Activated CD8-positive, alpha-beta T cell treated with anti-CD3 and anti-CD28 coated beads for 36 hours (primary cell): ENCODE measurements at regions of chr1 and their contacts with region 1.

Region 1: DNA sequence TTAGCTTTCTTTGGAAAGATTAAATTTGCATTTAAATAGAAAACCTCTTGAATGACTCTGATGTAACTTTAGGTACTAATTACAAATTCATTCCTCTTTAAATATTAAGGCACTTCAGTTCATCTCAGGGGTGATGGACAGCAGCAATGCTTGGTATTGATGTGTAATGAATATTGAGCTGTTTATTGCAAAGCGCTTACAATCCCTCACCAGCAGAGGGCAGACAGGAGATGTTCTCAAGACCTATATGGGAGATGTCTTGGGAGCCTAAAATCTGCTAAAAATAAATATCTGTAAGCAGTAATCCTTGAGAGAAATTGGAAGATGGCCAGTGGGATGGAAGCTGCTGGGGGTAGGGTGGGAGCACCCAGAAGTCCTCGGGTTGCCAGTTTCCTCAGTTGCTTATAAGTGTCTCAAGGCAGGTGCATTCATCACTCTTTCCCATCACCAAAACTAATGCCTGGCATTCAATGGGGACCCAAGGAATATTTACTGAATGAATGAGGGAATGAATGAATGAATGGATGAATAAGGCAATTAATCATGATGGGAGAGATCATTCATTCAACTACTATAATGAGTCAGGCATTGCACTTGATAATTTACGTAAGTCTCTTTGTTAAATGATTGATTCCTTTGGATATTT is 2.3 kb downstream of the KLHDC8A start:
- DNase-seq: peak; percentile 82
- ATAC-seq: peak; percentile 82
- H3K4me3 Mint-ChIP-seq: no peak overlapping the region
- H3K27ac Mint-ChIP-seq: no peak overlapping the region
- H3K4me1 Mint-ChIP-seq: no peaks in the 10 kb centered on the region
- H3K27me3 Mint-ChIP-seq: peaks cover 2% of the 10 kb centered on the region
- CTCF ChIP-seq: peak; percentile 88

Region 2: DNA sequence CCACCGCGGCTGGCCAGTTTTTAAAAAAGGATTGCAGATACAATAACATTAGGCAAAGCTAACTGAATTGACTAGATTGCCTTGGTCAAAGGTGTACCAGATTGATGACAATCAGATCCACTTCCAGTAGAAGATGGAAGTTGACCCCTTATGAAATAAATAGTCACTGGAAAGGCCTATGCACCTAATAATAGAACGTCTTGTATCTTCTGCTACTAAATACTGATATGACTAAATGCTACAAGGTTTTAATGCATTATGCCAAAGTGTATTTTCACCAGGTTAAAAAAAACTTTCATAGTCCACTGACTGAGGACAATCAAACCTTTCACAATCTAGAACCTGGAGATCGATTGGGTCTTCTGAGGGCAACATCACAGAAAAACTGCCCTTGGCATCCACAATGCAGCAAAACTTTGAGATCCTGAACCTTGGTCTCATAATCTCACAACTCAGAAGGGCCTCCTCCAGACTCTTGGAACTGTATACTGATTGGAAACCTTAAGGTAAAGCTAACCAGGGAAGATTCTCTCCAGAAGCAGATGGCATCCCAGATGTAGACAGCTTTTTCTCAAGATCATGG is 224.8 kb before region 1 on chr1:
- CTCF ChIA-PET with region 1: no interaction called
- POLR2A ChIA-PET with region 1: no interaction called
- intact Hi-C with region 1: no loop called
- DNase-seq: no peak
- ATAC-seq: no peak
- H3K4me3 Mint-ChIP-seq: no peak overlapping the region
- H3K27ac Mint-ChIP-seq: no peak overlapping the region
- H3K4me1 Mint-ChIP-seq: no peaks in the 10 kb centered on the region
- H3K27me3 Mint-ChIP-seq: no peaks in the 10 kb centered on the region
- CTCF ChIP-seq: no peak

Region 3: GRCh38 chr1:205172729-205173366 is 181.5 kb before region 1 on chr1:
- CTCF ChIA-PET with region 1: no interaction called
- POLR2A ChIA-PET with region 1: no interaction called
- intact Hi-C with region 1: no loop called
- DNase-seq: no peak
- ATAC-seq: peak; percentile 75
- H3K4me3 Mint-ChIP-seq: no peak overlapping the region
- H3K27ac Mint-ChIP-seq: peak overlapping the region; percentile 69
- H3K4me1 Mint-ChIP-seq: peaks cover 35% of the 10 kb centered on the region
- H3K27me3 Mint-ChIP-seq: no peaks in the 10 kb centered on the region
- CTCF ChIP-seq: no peak

Region 4: DNA sequence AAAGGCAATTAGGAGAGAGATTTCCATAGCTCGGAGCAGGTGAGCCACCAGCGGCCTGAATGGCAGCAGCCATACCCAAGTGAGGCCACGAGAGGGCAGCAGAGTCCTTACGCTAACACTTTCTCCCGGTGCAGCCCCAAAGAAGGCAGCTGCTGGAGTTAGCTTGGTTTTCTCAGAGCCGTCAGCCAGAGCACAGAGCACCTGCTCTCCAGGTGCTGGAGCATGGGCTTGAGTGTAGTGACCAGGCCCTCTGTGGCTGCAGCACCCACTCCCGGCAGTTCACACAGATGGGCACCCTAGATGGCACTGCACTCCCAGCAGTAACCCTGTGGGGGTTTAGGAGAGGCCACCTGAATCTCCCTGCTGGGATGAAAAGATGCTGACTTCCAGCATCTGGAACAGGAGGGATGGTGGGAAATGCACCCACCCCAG is 80.8 kb before region 1 on chr1:
- CTCF ChIA-PET with region 1: interaction called, 35 read pairs
- POLR2A ChIA-PET with region 1: no interaction called
- intact Hi-C with region 1: no loop called
- DNase-seq: peak; percentile 92
- ATAC-seq: peak; percentile 94
- H3K4me3 Mint-ChIP-seq: no peak overlapping the region
- H3K27ac Mint-ChIP-seq: no peak overlapping the region
- H3K4me1 Mint-ChIP-seq: peaks cover 33% of the 10 kb centered on the region
- H3K27me3 Mint-ChIP-seq: no peaks in the 10 kb centered on the region
- CTCF ChIP-seq: peak; percentile 99

Region 5: DNA sequence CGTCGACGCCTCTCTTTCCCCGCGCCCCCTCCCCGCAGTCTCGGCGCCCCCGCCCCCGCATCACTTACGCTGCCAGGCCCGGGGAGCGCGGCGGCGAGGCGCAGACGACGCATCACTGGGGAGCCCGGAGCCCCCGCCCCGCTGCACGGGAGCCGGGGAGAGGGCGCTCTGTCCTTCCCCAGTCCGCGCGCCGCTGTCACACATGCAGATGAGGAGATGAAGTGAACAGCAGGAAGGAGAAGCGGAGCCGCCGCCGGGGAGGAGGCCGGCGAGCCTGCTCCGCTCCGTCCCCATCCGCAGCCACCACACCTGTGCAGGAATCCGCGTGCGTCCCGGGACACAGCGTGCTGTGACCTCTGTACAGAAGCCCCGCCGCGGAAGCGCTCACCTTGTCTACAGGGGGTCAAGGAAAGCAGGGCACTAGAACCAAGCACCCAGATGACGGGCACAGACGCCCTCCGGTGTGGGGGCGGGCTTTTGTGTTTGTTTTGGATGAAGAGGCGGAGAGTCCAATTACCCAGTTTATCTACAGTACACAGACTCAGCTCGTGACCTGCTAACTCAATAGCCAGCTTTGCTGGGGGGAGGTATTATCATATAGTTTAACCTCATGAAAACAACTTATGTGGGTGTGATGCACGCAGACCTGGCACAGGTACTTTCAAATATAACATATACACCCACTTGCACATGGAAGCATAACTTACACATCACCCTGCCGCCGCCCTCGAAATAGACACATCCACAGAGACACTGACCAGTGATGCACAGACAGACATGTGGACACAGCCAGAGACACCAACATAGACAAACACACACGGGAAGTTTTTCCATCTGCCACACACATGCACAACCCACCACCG is 10.1 kb before region 1 on chr1:
- CTCF ChIA-PET with region 1: interaction called, 23 read pairs
- POLR2A ChIA-PET with region 1: no interaction called
- intact Hi-C with region 1: no loop called
- DNase-seq: peak; percentile 65
- ATAC-seq: peak; percentile 77
- H3K4me3 Mint-ChIP-seq: peak overlapping the region; percentile 35
- H3K27ac Mint-ChIP-seq: no peak overlapping the region
- H3K4me1 Mint-ChIP-seq: peaks cover 11% of the 10 kb centered on the region
- H3K27me3 Mint-ChIP-seq: peaks cover 42% of the 10 kb centered on the region
- CTCF ChIP-seq: no peak

Region 6: DNA sequence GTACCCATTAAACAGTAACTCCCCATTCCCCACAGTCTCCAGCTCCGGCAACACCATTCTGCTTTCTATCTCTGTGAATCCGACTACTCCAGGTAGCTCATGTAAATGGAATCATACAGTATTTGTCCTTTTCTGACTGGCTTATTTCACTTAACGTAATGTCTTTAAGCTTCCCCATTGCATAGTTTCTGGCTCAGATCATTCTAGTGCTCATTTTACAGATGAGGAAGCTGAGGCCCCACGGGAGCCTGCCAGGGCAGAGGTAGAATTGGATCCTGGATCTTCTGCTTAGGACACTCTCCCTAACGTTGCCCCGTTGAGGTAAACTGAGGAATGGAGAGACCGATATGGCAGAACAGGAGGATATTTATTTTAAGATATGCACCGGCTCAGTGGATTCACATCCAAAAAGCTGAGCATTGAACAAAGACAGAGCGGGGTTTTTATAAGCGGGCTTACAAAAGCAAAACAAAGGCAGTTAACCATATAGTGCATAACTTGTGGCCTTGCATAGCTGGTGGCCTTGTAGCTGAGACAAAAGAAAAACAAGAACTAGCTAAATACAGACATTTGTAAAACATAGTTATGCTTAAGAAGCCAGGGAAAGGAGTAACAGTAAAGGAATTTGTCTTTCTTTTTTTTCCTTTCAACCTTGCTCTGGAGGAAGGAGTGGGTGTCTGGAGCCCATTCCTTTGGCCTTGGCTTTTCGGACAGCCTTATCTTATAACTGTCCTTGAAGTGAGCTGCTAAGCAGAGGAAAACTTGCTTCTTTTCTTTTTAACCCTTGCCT is 17.7 kb after region 1 on chr1:
- CTCF ChIA-PET with region 1: interaction called, 30 read pairs
- POLR2A ChIA-PET with region 1: no interaction called
- intact Hi-C with region 1: no loop called
- DNase-seq: no peak
- ATAC-seq: no peak
- H3K4me3 Mint-ChIP-seq: no peak overlapping the region
- H3K27ac Mint-ChIP-seq: no peak overlapping the region
- H3K4me1 Mint-ChIP-seq: peaks cover 11% of the 10 kb centered on the region
- H3K27me3 Mint-ChIP-seq: peaks cover 6% of the 10 kb centered on the region
- CTCF ChIP-seq: no peak

Region 7: DNA sequence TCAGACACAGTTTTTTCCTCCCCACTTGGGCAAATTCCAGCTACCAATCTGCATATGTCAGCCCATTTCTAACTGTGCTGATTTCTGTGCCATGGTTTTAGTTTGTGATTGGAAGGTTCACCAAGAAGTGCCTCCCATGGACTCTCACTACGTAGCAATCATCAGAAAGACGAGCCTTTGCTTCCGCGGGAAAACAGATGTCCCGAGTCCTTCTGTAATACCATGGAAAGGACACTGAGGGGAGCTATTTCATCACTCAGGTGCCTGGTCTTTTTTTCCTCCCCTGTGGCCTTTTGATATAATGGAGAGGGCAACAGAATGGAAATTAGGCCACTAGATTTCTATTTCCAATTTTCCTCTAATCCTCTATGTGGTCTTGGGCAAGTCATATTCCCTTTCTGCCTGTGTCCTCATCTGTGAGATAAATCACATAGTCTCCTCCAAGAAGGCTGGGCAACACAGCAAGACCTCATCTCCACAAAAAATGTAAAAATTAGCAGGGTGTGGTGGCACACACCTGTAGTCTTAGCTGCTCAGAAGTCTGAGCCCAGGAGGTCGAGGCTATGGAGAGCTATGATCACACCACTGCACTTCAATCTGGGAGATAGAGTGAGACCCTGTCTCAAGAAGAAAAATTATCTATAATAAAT is 42.7 kb after region 1 on chr1:
- CTCF ChIA-PET with region 1: interaction called, 17 read pairs
- POLR2A ChIA-PET with region 1: no interaction called
- intact Hi-C with region 1: no loop called
- DNase-seq: peak; percentile 29
- ATAC-seq: peak; percentile 88
- H3K4me3 Mint-ChIP-seq: no peak overlapping the region
- H3K27ac Mint-ChIP-seq: no peak overlapping the region
- H3K4me1 Mint-ChIP-seq: no peaks in the 10 kb centered on the region
- H3K27me3 Mint-ChIP-seq: peaks cover 4% of the 10 kb centered on the region
- CTCF ChIP-seq: peak; percentile 87

Region 8: GRCh38 chr1:205477121-205477758 is 122.9 kb after region 1 on chr1:
- CTCF ChIA-PET with region 1: interaction called, 121 read pairs
- POLR2A ChIA-PET with region 1: no interaction called
- intact Hi-C with region 1: no loop called
- DNase-seq: no peak
- ATAC-seq: no peak
- H3K4me3 Mint-ChIP-seq: no peak overlapping the region
- H3K27ac Mint-ChIP-seq: no peak overlapping the region
- H3K4me1 Mint-ChIP-seq: peaks cover 34% of the 10 kb centered on the region
- H3K27me3 Mint-ChIP-seq: peaks cover 24% of the 10 kb centered on the region
- CTCF ChIP-seq: no peak